Astrocyte of the cerebellum (primary cell): ENCODE measurements at regions of chr10 and their contacts with region 1.

Region 1: GRCh38 chr10:68742397-68742796 is 21.4 kb downstream of the CCAR1 start:
- DNase-seq: no peak
- H3K4me3 ChIP-seq: no peak overlapping the region
- CTCF ChIP-seq: no peak

Region 2: GRCh38 chr10:68397005-68397404 is 345.4 kb before region 1 on chr10:
- in situ Hi-C with region 1: loop called (anchors 10 kb)
- DNase-seq: no peak
- H3K4me3 ChIP-seq: no peak overlapping the region
- CTCF ChIP-seq: no peak

Region 3: DNA sequence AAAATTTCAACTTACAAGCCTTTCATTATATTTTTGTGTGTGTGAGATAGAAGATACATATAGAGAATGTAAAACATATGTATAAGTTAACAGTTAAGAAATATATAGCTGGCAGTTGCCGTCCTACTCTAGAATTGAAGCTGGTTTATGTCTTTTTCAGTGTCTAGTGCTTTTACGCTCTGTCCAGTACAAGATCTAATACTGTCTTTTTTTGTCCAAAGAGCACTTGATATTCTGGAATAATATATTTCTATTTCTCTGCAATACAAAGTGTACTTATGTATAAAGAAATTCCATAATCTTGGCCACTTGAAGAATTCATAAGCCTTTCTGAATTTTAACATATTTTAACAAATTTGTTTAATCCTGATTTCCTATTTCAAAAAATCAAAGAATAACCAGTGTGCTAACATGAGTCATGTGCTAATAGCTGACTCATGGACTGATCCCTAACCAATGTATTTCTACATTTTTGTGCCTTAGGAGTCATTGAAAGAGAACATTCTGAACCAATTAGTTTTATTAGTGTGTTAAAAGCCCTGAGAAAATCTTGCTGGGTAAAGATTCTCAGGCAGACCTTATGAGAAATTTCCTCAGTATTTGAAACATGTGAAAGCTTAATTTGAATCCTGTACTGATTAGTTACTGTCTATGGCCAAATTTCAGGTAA is 94.6 kb before region 1 on chr10:
- in situ Hi-C with region 1: no loop called
- DNase-seq: peak; percentile 74
- H3K4me3 ChIP-seq: no peak overlapping the region
- CTCF ChIP-seq: no peak